Mammary epithelial cell (primary cell): ENCODE measurements at regions of chr19 and their contacts with region 1.

Region 1: DNA sequence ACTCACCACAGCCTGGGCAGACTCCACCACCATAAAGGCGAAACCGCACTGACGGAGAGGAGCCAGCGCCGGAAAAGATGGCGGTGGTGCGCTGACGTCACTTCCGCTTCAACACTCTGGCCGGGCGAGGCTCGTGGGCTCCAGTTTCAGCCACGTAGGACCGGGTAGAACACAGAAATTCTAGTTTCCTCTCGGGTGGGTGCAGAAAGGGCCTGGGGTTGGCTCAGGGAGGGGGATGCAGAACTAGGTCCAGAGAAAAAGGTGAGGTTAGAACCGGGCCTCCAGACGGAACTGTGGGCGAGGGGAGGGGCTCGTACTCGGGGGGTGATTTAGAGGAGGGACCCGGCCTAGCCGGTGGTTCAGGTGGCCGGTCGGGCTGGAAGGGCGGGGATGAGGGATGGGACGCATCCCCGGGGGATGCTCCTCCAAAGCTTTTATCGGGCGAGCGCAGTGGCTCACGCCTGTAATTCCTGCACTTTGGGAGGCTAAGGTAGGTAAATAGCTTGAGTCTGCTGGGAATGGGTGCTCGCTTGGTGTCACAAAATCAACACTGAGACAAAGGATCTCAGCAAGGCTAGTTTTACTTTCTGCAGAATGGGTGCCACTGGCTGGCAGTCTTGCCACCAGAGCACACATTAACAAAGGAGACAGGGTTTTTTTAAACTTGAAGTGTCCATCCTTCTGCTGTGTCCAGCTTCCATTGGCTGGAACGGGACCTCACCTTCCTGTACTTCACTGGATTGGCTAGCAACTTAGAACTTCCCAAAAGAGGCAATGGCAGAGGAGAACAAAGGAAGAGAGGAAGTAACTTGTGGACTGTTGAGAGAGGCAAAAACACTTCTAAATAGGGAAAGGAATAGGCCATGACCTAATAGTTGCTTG is at the start of gene ZNF561:
- DNase-seq: peak; percentile 90
- H3K4me3 ChIP-seq: peak within 1 kb of the TSS; percentile 81 to 93 (median 86)
- H3K27ac ChIP-seq: peak within 1 kb of the TSS; percentile 77
- H3K4me1 ChIP-seq: peaks cover 21% of the 10 kb centered on the region
- H3K27me3 ChIP-seq: no peaks in the 10 kb centered on the region
- CTCF ChIP-seq: no peak
- total RNA-seq, gene ZNF561: 62.6 to 78.3 TPM

Region 2: GRCh38 chr19:9205501-9206113 is 415.8 kb before region 1 on chr19:
- CTCF ChIA-PET with region 1: no interaction called
- dilution Hi-C with region 1: no loop called
- in situ Hi-C with region 1: no loop called
- intact Hi-C with region 1: loop called (anchors 2 kb)
- DNase-seq: peak; percentile 53
- H3K4me3 ChIP-seq: peak overlapping the region; percentile 21 to 33 (median 27)
- H3K27ac ChIP-seq: no peak overlapping the region
- H3K4me1 ChIP-seq: no peaks in the 10 kb centered on the region
- H3K27me3 ChIP-seq: no peaks in the 10 kb centered on the region
- CTCF ChIP-seq: peak; percentile 71 to 89

Region 3: DNA sequence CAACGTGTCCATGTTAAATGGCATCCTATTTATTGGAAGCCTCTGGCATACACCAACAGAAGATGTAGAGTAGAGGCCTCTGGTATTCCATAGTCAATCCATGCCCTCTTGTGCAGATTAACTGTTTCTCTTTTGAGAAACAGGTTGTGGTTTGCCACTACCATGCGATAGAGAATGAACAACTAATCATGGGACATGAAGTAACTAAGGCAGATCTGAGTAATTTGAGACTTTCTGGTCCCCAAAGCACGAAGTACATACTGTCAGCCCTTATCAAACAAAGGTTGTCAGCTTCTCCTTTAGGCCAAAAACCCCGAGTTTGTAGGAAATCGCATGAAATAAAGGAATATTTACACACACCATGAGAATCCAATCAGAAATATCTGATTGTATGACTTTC is 40.7 kb before region 1 on chr19:
- CTCF ChIA-PET with region 1: no interaction called
- dilution Hi-C with region 1: no loop called
- in situ Hi-C with region 1: no loop called
- intact Hi-C with region 1: no loop called
- DNase-seq: no peak
- H3K4me3 ChIP-seq: no peak overlapping the region
- H3K27ac ChIP-seq: no peak overlapping the region
- H3K4me1 ChIP-seq: no peaks in the 10 kb centered on the region
- H3K27me3 ChIP-seq: no peaks in the 10 kb centered on the region
- CTCF ChIP-seq: no peak

Region 4: GRCh38 chr19:9741476-9742171 is 120.2 kb after region 1 on chr19:
- CTCF ChIA-PET with region 1: no interaction called
- dilution Hi-C with region 1: no loop called
- in situ Hi-C with region 1: no loop called
- intact Hi-C with region 1: no loop called
- DNase-seq: peak; percentile 20
- H3K4me3 ChIP-seq: no peak overlapping the region
- H3K27ac ChIP-seq: no peak overlapping the region
- H3K4me1 ChIP-seq: no peaks in the 10 kb centered on the region
- H3K27me3 ChIP-seq: no peaks in the 10 kb centered on the region
- CTCF ChIP-seq: no peak

Region 5: DNA sequence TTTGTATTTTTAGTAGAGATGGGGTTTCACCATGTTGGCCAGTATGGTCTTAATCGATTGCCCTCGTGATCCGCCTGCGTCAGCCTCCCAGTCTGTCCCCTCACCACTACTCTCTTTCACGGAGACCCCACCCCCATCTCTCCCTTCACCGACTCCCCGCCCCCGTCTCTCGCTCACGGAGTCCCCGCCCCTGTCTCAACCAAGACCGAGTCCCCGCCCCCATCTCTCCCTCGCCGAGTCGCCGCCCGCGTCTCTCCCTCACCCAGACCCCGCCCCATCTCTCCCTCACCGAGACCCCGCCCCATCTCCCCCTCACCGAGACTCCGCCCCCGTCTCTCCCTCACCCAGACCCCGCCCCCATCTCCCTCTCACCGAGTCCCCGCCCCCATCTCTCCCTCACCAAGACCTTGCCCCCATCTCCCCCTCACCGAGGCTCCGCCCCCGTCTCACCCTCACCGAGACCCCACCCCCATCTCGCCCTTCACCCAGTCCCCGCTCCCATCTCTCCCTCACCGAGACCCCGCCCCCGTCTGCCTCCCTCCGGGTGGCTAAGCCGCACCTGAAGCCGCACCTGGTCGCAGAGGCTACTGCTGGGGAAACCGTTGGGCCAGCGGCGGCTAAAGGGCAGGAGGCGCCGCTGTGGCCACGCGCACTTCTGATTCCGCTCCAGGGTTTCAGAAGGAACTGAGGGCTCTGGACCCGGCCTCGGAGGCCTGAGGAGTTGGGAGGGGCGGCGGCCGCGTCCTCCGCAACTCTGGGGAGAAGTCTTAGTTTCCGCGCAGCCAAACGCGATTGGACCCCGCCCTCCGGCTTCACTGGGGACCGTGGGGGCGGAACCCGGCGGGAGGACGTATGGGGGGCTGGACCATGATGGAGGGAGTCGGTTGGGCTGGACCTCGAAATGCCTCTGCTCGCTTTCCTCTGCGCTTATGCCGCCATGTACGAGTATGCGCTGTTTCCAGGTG is 164.3 kb after region 1 on chr19:
- CTCF ChIA-PET with region 1: no interaction called
- dilution Hi-C with region 1: no loop called
- in situ Hi-C with region 1: loop called (anchors 5 to 10 kb)
- intact Hi-C with region 1: loop called (anchors 1 kb)
- DNase-seq: peak; percentile 93
- H3K4me3 ChIP-seq: peak overlapping the region; percentile 66 to 74 (median 71)
- H3K27ac ChIP-seq: peak overlapping the region; percentile 73
- H3K4me1 ChIP-seq: no peaks in the 10 kb centered on the region
- H3K27me3 ChIP-seq: no peaks in the 10 kb centered on the region
- CTCF ChIP-seq: no peak

Region 6: GRCh38 chr19:9847087-9847671 is 225.8 kb after region 1 on chr19:
- CTCF ChIA-PET with region 1: no interaction called
- dilution Hi-C with region 1: no loop called
- in situ Hi-C with region 1: no loop called
- intact Hi-C with region 1: loop called (anchors 1 kb)
- DNase-seq: peak; percentile 71
- H3K4me3 ChIP-seq: no peak overlapping the region
- H3K27ac ChIP-seq: no peak overlapping the region
- H3K4me1 ChIP-seq: no peaks in the 10 kb centered on the region
- H3K27me3 ChIP-seq: no peaks in the 10 kb centered on the region
- CTCF ChIP-seq: peak; percentile 70 to 78

Region 7: GRCh38 chr19:9914315-9915207 is 293.2 kb after region 1 on chr19:
- CTCF ChIA-PET with region 1: no interaction called
- dilution Hi-C with region 1: no loop called
- in situ Hi-C with region 1: no loop called
- intact Hi-C with region 1: loop called (anchors 10 kb)
- DNase-seq: peak; percentile 77
- H3K4me3 ChIP-seq: peak overlapping the region; percentile 45 to 53 (median 46)
- H3K27ac ChIP-seq: no peak overlapping the region
- H3K4me1 ChIP-seq: peaks cover 6% of the 10 kb centered on the region
- H3K27me3 ChIP-seq: peaks cover 8% of the 10 kb centered on the region
- CTCF ChIP-seq: peak; percentile 12 to 62